ENCODE measurements at regions of chr6 and their contacts with region 1.

Region 1: DNA sequence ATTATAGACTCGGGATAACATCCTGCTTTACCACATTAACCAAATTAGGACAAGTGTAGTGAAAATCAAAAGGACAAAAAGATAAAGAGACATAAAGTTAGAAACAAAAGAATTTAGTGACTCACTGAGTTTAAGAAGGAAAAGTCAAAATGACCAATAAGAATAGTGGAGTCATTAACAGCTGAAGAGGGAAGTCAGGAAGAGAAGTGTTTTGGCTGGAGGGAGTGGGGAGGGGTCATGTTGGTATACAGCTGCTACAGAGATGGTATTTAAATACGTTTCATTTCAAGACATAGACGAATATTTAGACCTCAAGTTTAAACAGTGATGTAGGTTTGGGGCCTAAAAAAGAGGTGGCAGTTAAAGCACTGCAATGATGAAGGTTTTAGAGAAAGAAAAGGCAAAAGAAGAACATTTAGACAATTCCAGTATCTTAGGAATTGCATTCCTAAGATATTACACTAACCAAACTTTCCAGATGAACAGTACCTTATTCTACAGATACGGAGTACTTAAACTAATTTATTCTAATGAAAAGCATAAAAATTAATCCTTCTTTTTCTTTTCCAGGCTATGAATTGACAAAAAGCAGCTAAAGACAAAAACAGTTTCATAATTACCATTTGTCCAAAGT is 10.6 kb downstream of the FKBP5 start:
- DNase-seq: no peak
- H3K4me3 Mint-ChIP-seq: no peak overlapping the region
- H3K27ac Mint-ChIP-seq: no peak overlapping the region
- H3K4me1 Mint-ChIP-seq: peaks cover 9% of the 10 kb centered on the region
- H3K27me3 Mint-ChIP-seq: no peaks in the 10 kb centered on the region
- CTCF ChIP-seq: no peak

Region 2: GRCh38 chr6:35576682-35577081 is 101.5 kb before region 1 on chr6:
- CTCF ChIA-PET with region 1: interaction called, 11 read pairs
- intact Hi-C with region 1: no loop called
- DNase-seq: no peak
- H3K4me3 Mint-ChIP-seq: no peak overlapping the region
- H3K27ac Mint-ChIP-seq: no peak overlapping the region
- H3K4me1 Mint-ChIP-seq: no peaks in the 10 kb centered on the region
- H3K27me3 Mint-ChIP-seq: no peaks in the 10 kb centered on the region
- CTCF ChIP-seq: no peak

Region 3: DNA sequence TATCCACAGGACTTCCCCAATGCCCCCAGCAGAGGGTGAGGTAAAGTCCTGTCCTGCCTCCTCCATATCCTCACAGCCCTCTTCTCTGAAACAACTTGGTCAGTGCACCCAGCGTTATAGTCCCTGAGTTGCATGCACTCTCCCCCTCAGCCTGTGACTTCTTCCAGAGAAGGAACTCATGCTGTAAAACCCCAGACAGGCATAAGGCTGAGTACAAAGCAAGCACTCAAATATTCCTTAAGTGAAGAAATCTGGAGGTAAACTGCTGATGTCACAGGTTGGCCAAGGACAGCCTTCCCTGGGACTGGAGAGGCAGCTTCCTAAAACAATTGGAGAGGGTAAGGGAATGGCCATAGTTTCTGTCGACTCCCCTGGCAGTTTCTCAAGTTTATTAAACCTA is 255.7 kb after region 1 on chr6:
- CTCF ChIA-PET with region 1: no interaction called
- intact Hi-C with region 1: no loop called
- DNase-seq: no peak
- H3K4me3 Mint-ChIP-seq: no peak overlapping the region
- H3K27ac Mint-ChIP-seq: no peak overlapping the region
- H3K4me1 Mint-ChIP-seq: no peaks in the 10 kb centered on the region
- H3K27me3 Mint-ChIP-seq: no peaks in the 10 kb centered on the region
- CTCF ChIP-seq: no peak

Measured in Calu3 (cell line).